Activated CD8-positive, alpha-beta T cell treated with anti-CD3 and anti-CD28 coated beads for 36 hours (primary cell): ENCODE measurements at regions of chr9 and their contacts with region 1.

Region 1: GRCh38 chr9:127423934-127424675 is at the start of gene ZNF79:
- DNase-seq: peak; percentile 95
- ATAC-seq: peak; percentile 81
- H3K4me3 Mint-ChIP-seq: peak within 1 kb of the TSS; percentile 98
- H3K27ac Mint-ChIP-seq: peak within 1 kb of the TSS; percentile 96
- H3K4me1 Mint-ChIP-seq: peaks cover 44% of the 10 kb centered on the region
- H3K27me3 Mint-ChIP-seq: no peaks in the 10 kb centered on the region
- CTCF ChIP-seq: no peak
- total RNA-seq, gene ZNF79: 7.6 TPM

Region 2: GRCh38 chr9:127388037-127388855 is 35.9 kb before region 1 on chr9:
- CTCF ChIA-PET with region 1: interaction called, 3 read pairs
- POLR2A ChIA-PET with region 1: interaction called, 4 read pairs
- intact Hi-C with region 1: loop called (anchors 1 kb)
- DNase-seq: peak; percentile 97
- ATAC-seq: peak; percentile 95
- H3K4me3 Mint-ChIP-seq: no peak overlapping the region
- H3K27ac Mint-ChIP-seq: peak overlapping the region; percentile 60
- H3K4me1 Mint-ChIP-seq: peaks cover 34% of the 10 kb centered on the region
- H3K27me3 Mint-ChIP-seq: peaks cover 63% of the 10 kb centered on the region
- CTCF ChIP-seq: no peak

Region 3: DNA sequence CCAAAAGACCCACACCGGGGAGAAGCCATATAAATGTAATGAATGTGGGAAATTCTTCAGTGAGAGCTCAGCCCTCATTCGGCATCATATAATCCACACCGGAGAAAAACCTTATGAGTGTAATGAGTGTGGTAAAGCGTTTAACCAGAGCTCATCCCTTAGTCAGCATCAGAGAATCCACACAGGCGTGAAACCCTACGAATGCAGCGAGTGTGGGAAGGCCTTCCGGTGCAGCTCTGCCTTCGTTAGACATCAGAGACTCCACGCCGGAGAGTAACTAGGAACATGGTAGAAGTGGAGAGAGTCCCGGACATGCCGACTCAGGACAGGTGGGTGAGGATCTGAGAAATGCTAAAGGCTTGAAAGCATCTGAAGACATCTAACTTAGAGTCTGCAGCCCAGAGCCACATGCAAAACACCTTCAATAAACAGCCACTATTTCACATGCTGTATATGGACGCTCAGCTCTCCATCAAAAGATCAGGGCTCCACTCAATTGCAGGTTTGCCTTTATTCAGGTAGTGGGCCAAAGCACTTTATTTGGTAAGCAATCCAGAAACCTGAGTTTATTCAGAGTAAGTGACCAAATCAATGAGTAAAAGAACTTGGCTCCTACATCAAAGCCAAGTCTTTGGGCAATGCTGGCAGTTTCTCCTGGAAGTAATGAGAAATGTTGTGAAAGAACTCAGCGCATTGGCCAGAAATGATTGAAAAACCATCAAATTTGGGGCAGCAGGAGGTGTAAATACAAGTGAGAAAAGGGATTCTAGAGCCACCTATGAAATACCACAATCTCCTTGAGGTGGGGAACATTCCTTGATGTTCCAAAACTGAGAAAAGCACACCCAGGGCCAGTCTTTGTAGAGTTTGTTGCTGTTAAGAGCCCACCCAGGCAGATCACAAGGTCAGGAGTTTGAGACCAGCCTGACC is 21.1 kb after region 1 on chr9:
- CTCF ChIA-PET with region 1: interaction called, 6 read pairs
- POLR2A ChIA-PET with region 1: interaction called, 52 read pairs
- intact Hi-C with region 1: no loop called
- DNase-seq: no peak
- ATAC-seq: no peak
- H3K4me3 Mint-ChIP-seq: no peak overlapping the region
- H3K27ac Mint-ChIP-seq: peak overlapping the region; percentile 72
- H3K4me1 Mint-ChIP-seq: peaks cover 34% of the 10 kb centered on the region
- H3K27me3 Mint-ChIP-seq: no peaks in the 10 kb centered on the region
- CTCF ChIP-seq: no peak